Adrenal gland (tissue), 19 donors: ENCODE measurements at regions of chr3 and their contacts with region 1.

Region 1: DNA sequence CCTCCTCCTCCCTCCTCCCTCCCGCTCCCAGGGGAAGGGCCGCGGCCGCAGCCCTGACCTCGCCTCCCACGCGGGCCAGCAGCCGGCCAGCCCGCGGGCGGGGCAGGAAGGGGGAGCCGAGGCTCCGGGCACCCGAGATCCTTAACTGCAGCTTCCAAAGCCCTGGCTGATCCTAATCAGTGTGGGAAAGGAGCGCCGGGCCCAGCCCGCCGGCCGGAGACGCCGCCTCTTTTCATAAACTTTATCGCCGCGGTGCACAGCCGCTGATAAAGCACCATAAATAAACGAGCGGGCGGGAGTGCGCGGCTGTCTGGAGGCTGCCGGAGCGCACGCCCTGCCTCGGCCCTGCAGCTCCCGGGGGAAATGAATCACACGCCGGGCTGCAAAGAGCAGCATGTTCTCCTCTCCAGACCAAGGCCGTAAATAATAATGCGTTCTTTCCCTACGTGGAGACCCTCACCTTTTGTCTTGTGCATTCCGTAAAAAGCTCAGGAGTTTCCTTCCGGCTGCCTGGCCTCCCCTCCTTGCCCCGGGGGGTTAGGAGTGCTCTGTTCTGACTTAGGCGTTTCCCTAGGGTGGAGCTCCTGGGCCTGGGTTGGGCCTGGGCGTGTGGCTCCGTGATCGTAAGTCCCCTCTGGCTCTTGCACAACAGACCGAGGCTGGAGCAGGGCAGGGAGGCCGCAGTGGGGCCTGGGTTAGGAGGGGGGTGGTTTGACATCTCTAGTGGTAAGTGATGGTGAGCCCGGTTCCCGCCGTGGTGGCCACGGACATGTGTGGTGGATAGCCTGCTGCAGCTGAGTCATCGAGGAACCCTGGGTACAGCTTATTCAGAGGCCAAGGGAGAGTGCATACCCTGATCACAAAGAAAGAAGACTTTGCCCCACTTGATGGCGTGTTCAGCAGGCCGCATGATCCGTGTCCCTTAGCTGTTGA is 132.6 kb upstream of the HES1 start:
- DNase-seq: peak; percentile 85 to 95 (median 94)
- H3K4me3 ChIP-seq: peak overlapping the region in 2 of 4 donors; percentile 20 to 34
- H3K27ac ChIP-seq: peak overlapping the region; percentile 38 to 89 (median 79)
- H3K4me1 ChIP-seq: peaks cover 26 to 34% of the 10 kb centered on the region in 2 donors
- H3K27me3 ChIP-seq: no peaks in the 10 kb centered on the region
- CTCF ChIP-seq: peak in 1 of 6 experiments; percentile 7
- POLR2A ChIP-seq: peak in 1 of 2 donors; percentile 69

Region 2: GRCh38 chr3:193946945-193947344 is 56.4 kb before region 1 on chr3:
- intact Hi-C with region 1: no loop called
- DNase-seq: no peak
- H3K4me3 ChIP-seq: no peak overlapping the region
- H3K27ac ChIP-seq: no peak overlapping the region
- H3K4me1 ChIP-seq: no peaks in the 10 kb centered on the region
- H3K27me3 ChIP-seq: no peaks in the 10 kb centered on the region
- CTCF ChIP-seq: no peak
- POLR2A ChIP-seq: no peak

Region 3: DNA sequence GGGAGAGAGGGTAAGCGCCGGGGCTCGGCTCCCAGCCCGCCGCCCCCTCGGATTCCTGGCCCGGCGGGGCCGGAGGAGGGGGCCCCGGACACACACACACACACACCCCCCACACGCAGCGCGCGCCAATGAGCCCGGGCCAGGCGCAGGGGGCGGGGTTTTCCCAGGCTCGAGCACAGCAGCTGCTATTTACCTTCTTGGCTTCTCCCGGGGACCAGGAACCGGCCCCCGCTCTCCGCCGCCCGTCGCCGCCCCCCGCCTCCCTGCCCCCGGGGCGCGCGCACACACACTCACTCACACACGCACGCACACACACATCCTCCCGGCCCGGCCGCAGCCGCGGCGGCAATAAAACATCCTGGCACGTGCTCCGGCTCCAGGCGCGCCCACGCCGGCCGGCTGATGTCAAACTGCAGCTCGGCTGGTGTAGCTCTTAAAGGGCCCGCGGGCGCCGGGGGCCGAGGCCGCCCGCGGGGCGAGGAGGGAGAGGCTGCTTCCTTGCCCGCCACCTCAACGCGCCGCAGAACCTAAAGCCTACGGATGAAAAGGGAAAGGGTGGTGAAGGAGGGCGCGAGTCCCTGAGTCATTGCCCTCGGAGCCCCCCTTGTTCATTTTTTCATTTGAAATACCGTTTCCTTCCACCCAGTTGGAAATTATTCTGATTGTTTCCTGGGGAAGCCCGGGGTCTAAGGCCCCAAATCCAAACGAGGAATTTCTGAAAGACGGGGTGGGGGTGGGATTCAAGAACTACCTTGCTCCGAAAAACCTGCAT is 131.6 kb after region 1 on chr3:
- intact Hi-C with region 1: loop called in 1 of 2 experiments (anchors 10 kb)
- DNase-seq: peak; percentile 86 to 94 (median 92)
- H3K4me3 ChIP-seq: peak overlapping the region in 3 of 4 donors; percentile 4 to 58 (median 36)
- H3K27ac ChIP-seq: peak overlapping the region; percentile 88 to 97 (median 91)
- H3K4me1 ChIP-seq: peaks cover 10 to 35% of the 10 kb centered on the region in 2 donors
- H3K27me3 ChIP-seq: no peaks in the 10 kb centered on the region
- CTCF ChIP-seq: peak in 1 of 6 experiments; percentile 11
- POLR2A ChIP-seq: peak; percentile 17 to 83